ENCODE measurements at regions of chr6 and their contacts with region 1.

Region 1: DNA sequence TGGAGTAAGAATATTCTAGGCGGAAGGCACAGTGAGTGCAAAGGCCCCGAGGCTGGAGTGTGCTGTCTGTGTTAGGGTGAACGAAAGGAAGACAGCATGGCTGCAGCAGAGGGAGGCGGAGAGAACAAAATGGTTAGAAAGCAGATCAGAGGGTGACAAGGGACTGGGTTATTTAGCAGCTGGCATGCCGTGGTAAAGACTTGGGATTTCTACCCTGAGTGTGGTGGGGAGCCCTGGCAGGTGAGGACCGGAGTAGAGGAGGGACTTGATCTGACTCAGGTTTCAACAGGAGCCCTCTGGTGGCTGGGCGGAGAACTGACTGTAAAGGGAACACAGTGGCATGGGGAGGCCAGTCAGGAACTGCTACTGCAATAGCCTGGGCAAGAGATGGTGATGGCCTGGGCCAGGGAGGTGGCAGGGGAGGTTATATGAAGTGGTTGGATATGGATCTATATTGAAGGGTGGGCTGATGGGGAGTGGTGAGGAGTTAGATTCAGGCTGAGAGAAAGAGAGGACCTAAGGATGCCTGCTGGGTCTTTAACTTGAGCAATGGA is 38.0 kb downstream of the PIM1 start:
- DNase-seq: peak; percentile 88
- ATAC-seq: peak; percentile 66
- H3K4me3 Mint-ChIP-seq: peak overlapping the region; percentile 76
- H3K27ac Mint-ChIP-seq: peak overlapping the region; percentile 92
- H3K4me1 Mint-ChIP-seq: peaks cover 63% of the 10 kb centered on the region
- H3K27me3 Mint-ChIP-seq: no peaks in the 10 kb centered on the region

Region 2: GRCh38 chr6:37018198-37019064 is 189.5 kb before region 1 on chr6:
- POLR2A ChIA-PET with region 1: interaction called, 51 read pairs
- DNase-seq: peak; percentile 90
- ATAC-seq: peak; percentile 94
- H3K4me3 Mint-ChIP-seq: peak overlapping the region; percentile 31
- H3K27ac Mint-ChIP-seq: peak overlapping the region; percentile 70
- H3K4me1 Mint-ChIP-seq: peaks cover 51% of the 10 kb centered on the region
- H3K27me3 Mint-ChIP-seq: no peaks in the 10 kb centered on the region

Region 3: DNA sequence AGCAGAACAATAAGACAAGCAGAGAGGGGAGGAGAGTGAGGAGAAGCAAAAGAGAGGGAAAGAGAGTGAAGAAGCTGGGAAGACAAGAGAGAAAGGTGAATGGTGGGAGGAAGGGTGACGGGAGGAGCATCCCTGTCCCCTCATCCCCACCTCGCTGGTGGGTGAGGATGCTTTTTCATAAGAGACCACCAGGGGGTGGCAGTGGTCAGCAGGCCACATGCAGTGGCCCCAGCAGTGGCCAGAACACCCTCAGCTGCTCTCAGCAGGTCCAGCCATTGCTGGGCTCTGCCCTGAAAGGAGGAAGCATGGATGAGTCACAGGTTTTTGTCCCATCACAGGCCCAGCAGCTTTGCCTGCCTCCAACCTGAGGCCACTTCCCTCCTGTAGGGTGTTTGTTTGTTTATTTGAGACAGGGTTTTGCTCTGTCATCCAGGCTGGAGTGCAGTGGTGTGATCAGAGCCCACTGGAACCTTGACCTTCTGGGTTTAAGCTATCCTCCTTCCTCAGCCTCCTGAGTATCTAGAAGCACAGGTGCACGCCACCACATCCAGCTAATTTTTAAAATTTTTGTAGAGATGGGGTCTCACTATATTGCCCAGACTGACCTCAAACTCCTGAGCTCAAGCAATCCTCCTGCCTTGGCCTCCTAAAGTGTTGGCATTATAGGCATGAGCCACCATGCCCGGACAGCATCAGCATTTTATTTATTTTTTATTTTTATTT is 178.6 kb before region 1 on chr6:
- POLR2A ChIA-PET with region 1: interaction called, 51 read pairs
- DNase-seq: no peak
- ATAC-seq: peak; percentile 74
- H3K4me3 Mint-ChIP-seq: peak overlapping the region; percentile 20
- H3K27ac Mint-ChIP-seq: peak overlapping the region; percentile 92
- H3K4me1 Mint-ChIP-seq: peaks cover 54% of the 10 kb centered on the region
- H3K27me3 Mint-ChIP-seq: no peaks in the 10 kb centered on the region

Region 4: GRCh38 chr6:37190159-37190535 is 17.8 kb before region 1 on chr6:
- POLR2A ChIA-PET with region 1: interaction called, 15 read pairs
- DNase-seq: peak; percentile 26
- ATAC-seq: peak; percentile 48
- H3K4me3 Mint-ChIP-seq: peak overlapping the region; percentile 60
- H3K27ac Mint-ChIP-seq: peak overlapping the region; percentile 90
- H3K4me1 Mint-ChIP-seq: peaks cover 56% of the 10 kb centered on the region
- H3K27me3 Mint-ChIP-seq: no peaks in the 10 kb centered on the region

Region 5: GRCh38 chr6:37314487-37315156 is 106.6 kb after region 1 on chr6:
- POLR2A ChIA-PET with region 1: interaction called, 12 read pairs
- DNase-seq: peak; percentile 43
- ATAC-seq: peak; percentile 82
- H3K4me3 Mint-ChIP-seq: no peak overlapping the region
- H3K27ac Mint-ChIP-seq: peak overlapping the region; percentile 60
- H3K4me1 Mint-ChIP-seq: peaks cover 17% of the 10 kb centered on the region
- H3K27me3 Mint-ChIP-seq: no peaks in the 10 kb centered on the region

Measured in activated naive CD8-positive, alpha-beta T cell treated with anti-CD3 and anti-CD28 coated beads, Interleukin-2, amount 10 ng/mL, durations not matched to agents 7 days and 5 days (primary cell).